HCT116 (cell line): ENCODE measurements at regions of chr13 and their contacts with region 1.

Region 1: GRCh38 chr13:44243198-44243857 is 130.3 kb upstream of the SERP2 start:
- DNase-seq: peak; percentile 92
- ATAC-seq: peak; percentile 87
- H3K4me3 ChIP-seq: no peak overlapping the region
- H3K27ac ChIP-seq: peak overlapping the region; percentile 50
- H3K4me1 ChIP-seq: peaks cover 24 to 45% of the 10 kb centered on the region in 2 experiments
- H3K27me3 ChIP-seq: no peaks in the 10 kb centered on the region
- CTCF ChIP-seq: peak in 2 of 3 experiments; percentile 66 to 73; a peak in 4 of 6 replicates
- POLR2A ChIP-seq: no peak
- RAD21 ChIP-seq: no peak

Region 2: GRCh38 chr13:44050450-44051063 is 192.8 kb before region 1 on chr13:
- CTCF ChIA-PET with region 1: no interaction called
- POLR2A ChIA-PET with region 1: no interaction called
- RAD21 ChIA-PET with region 1: interaction called in 1 of 2 experiments, 3 read pairs
- intact Hi-C with region 1: loop called (anchors 5 kb)
- DNase-seq: peak; percentile 32
- ATAC-seq: peak; percentile 54; the same call in 1 of the 2 replicates
- H3K4me3 ChIP-seq: no peak overlapping the region
- H3K27ac ChIP-seq: no peak overlapping the region
- H3K4me1 ChIP-seq: no peaks in the 10 kb centered on the region
- H3K27me3 ChIP-seq: no peaks in the 10 kb centered on the region
- CTCF ChIP-seq: peak; percentile 51 to 69 (median 67); a peak in 5 of 6 replicates
- POLR2A ChIP-seq: no peak
- RAD21 ChIP-seq: peak; percentile 78

Region 3: DNA sequence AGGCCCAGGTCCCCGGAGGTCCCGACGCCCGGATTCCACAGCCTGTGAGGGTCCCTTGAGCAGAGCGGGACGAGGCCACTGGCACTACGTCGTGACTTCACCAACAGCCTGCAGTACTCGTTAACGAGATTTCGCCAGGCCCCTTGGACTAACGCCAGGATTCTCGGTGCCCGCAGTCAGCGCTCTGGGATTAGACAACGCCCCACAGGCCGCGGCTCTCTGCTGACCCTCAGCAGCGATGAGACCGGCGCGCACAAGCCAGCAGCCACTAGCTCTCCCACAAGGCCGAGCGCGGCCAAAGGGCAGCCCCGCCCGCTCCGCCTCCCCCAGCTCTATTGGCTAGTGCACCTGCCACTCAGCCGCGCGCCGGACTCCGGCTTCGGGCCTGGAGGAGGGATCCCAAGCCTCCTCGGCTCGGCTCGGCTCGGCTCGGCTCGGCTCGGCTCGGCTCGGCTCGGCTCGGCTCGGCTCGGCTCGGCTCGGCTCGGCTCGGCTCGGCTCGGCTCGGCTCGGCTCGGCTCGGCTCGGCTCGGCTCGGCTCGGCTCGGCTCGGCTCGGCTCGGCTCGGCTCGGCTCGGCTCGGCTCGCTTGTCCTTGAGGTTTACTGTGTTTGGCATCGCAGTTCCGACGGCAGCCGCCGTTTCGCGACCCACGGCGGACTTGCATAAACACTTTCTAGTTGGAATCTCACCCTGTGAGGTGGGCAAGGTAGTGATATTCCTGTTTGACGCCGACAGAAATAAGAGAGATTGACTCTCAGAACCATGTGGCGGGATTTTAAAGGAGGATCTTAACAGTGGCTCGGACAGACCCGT is 101.4 kb before region 1 on chr13:
- CTCF ChIA-PET with region 1: no interaction called
- POLR2A ChIA-PET with region 1: interaction called, 3 read pairs
- RAD21 ChIA-PET with region 1: no interaction called
- intact Hi-C with region 1: loop called (anchors 5 kb)
- DNase-seq: peak; percentile 85
- ATAC-seq: peak; percentile 98
- H3K4me3 ChIP-seq: peak overlapping the region; percentile 66 to 72
- H3K27ac ChIP-seq: peak overlapping the region; percentile 89
- H3K4me1 ChIP-seq: peaks cover 18 to 33% of the 10 kb centered on the region in 2 experiments
- H3K27me3 ChIP-seq: no peaks in the 10 kb centered on the region
- CTCF ChIP-seq: no peak
- POLR2A ChIP-seq: peak; percentile 81
- RAD21 ChIP-seq: no peak; the same call in 1 of the 2 replicates

Region 4: DNA sequence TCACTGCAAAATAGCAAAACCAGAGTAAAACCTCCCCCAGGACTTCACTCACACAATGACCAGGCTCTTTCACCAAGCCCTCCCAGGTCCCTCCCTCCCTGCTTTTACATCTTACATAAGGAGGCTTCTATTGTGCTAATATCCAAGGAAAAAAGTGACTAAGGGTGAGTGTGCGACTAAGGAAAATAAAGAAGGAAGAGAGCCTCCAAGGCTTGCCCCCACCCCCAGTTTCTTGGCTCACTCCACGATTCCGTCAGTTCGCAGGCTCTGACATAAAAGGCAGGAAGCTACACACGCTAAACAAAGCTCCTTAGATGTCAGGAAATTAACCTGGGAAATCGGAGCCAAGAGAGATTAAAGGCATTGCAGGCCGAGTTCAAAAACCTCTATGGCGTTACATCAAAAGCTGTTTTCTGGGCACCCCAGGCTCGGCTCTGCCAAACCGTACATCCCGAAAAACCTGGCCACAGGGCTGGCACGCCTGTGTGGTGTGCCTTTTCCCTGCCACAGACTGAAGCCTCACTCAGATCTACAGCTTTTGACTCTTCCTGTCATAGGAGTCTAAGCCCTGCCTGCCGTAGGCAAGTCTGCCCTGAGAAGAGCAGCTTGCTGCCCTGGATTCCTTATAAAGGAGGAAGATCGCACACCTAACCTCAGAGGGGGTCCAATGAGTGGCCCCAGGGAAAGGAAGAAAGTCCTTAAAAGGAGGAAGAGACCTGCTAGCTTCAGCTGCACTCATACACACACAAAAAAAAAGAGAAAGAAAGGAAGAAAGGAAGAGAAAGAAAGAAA is 63.3 kb after region 1 on chr13:
- CTCF ChIA-PET with region 1: interaction called, 8 read pairs
- POLR2A ChIA-PET with region 1: interaction called, 11 read pairs
- RAD21 ChIA-PET with region 1: interaction called, 11 to 16 read pairs
- intact Hi-C with region 1: loop called (anchors 1 kb)
- DNase-seq: peak; percentile 99
- ATAC-seq: peak; percentile 84
- H3K4me3 ChIP-seq: peak overlapping the region; percentile 5 to 35
- H3K27ac ChIP-seq: peak overlapping the region; percentile 96
- H3K4me1 ChIP-seq: peaks cover 66 to 99% of the 10 kb centered on the region in 2 experiments
- H3K27me3 ChIP-seq: no peaks in the 10 kb centered on the region
- CTCF ChIP-seq: no peak
- POLR2A ChIP-seq: no peak
- RAD21 ChIP-seq: no peak

Region 5: GRCh38 chr13:44312898-44313551 is 69.7 kb after region 1 on chr13:
- CTCF ChIA-PET with region 1: no interaction called
- POLR2A ChIA-PET with region 1: no interaction called
- RAD21 ChIA-PET with region 1: interaction called in 1 of 2 experiments, 11 read pairs
- intact Hi-C with region 1: loop called (anchors 1 kb)
- DNase-seq: peak; percentile 88
- ATAC-seq: peak; percentile 79
- H3K4me3 ChIP-seq: peak overlapping the region in 1 of 2 experiments; percentile 32; a peak in 2 of 4 replicates
- H3K27ac ChIP-seq: peak overlapping the region; percentile 83
- H3K4me1 ChIP-seq: peaks cover 51 to 80% of the 10 kb centered on the region in 2 experiments
- H3K27me3 ChIP-seq: no peaks in the 10 kb centered on the region
- CTCF ChIP-seq: no peak
- POLR2A ChIP-seq: no peak
- RAD21 ChIP-seq: no peak

Region 6: DNA sequence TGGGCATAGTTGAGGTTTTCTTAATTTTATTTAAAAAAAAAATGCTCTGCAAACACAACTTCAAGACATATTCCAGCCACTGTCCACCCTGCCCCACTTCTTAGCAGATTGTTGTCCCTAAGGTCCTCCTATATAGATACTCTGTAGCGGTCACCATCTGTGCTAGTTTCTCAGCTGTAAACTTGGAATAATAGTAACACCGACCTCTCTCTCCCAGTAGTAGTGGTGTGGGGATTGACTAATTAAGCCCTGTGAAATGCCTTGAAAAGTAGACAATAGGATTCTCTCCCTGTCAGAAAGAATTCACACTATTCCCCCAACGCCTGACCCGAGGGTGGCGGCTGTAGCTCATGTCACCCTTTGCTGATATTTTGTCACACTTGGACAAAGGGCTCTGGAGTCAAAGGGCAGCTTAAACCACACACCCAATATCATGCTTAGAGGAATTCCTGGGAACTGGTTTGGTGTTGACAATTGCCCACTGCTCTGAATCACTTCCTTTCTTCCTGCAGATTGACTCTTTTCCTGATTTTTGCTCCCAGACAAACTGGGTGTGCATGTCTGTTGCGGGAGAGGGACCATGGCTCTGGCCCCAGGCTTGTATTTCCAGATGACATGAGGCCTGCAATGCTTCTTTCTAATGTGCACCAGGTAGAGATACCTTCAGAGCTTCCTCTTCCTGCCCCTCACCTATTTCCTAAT is 121.2 kb after region 1 on chr13:
- CTCF ChIA-PET with region 1: interaction called, 3 read pairs
- POLR2A ChIA-PET with region 1: no interaction called
- RAD21 ChIA-PET with region 1: no interaction called
- intact Hi-C with region 1: loop called (anchors 5 kb)
- DNase-seq: peak; percentile 71
- ATAC-seq: peak; percentile 79
- H3K4me3 ChIP-seq: peak overlapping the region in 1 of 2 experiments; percentile 11; a peak in 2 of 4 replicates
- H3K27ac ChIP-seq: peak overlapping the region; percentile 28; the same call in 1 of the 2 replicates
- H3K4me1 ChIP-seq: peaks cover 19 to 75% of the 10 kb centered on the region in 2 experiments; a peak in 3 of 4 replicates
- H3K27me3 ChIP-seq: no peaks in the 10 kb centered on the region
- CTCF ChIP-seq: no peak
- POLR2A ChIP-seq: no peak
- RAD21 ChIP-seq: no peak

Region 7: GRCh38 chr13:44396701-44397580 is 153.6 kb after region 1 on chr13:
- CTCF ChIA-PET with region 1: no interaction called
- POLR2A ChIA-PET with region 1: no interaction called
- RAD21 ChIA-PET with region 1: no interaction called
- intact Hi-C with region 1: no loop called
- DNase-seq: no peak
- ATAC-seq: no peak
- H3K4me3 ChIP-seq: no peak overlapping the region
- H3K27ac ChIP-seq: no peak overlapping the region
- H3K4me1 ChIP-seq: peaks cover 0 to 3% of the 10 kb centered on the region in 2 experiments; a peak in 1 of 4 replicates
- H3K27me3 ChIP-seq: no peaks in the 10 kb centered on the region
- CTCF ChIP-seq: no peak
- POLR2A ChIP-seq: no peak
- RAD21 ChIP-seq: no peak

Region 8: DNA sequence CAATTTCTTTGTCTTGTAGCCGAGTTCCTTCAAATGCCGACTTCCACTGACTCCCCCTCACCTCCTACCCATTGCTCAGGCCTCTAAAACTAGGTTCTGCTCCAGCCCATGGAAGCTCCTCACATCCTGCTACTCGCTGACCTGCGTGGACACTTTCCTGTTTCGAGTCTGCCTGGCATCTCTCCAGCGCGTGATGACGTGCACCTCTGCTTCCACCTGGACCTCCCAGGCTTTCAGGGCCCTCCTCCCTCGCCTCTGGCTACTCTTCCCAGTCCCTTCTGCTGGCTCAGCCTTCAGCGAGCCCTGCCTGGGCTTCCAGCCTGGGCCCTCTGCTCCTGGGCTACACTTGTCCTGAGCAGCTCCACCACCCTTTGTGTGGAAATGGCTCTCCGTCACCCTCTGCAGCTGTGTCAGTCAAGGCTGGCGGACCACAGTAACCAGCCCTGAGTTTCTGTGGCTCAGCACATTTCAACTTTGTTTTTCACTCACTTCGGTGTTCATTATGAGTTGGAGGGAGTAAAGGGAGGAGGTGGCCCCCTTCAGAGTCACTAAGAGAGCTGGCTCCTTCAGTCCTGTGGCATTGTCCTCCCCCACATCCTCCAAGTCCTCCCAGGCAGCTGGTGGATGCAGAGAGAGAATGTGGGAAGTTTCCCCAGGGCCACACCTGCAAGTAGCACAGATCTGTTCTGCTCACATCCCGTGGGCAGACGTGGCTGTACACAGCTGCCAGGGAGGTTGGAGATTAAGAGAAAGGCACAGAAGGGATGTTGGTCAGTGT is 179.6 kb after region 1 on chr13:
- CTCF ChIA-PET with region 1: no interaction called
- POLR2A ChIA-PET with region 1: no interaction called
- RAD21 ChIA-PET with region 1: no interaction called
- intact Hi-C with region 1: no loop called
- DNase-seq: no peak
- ATAC-seq: no peak
- H3K4me3 ChIP-seq: no peak overlapping the region
- H3K27ac ChIP-seq: no peak overlapping the region
- H3K4me1 ChIP-seq: no peaks in the 10 kb centered on the region
- H3K27me3 ChIP-seq: no peaks in the 10 kb centered on the region
- CTCF ChIP-seq: no peak
- POLR2A ChIP-seq: no peak
- RAD21 ChIP-seq: no peak